Left colon (tissue), 2 donors: ENCODE measurements at regions of chr4 and their contacts with region 1.

Region 1: DNA sequence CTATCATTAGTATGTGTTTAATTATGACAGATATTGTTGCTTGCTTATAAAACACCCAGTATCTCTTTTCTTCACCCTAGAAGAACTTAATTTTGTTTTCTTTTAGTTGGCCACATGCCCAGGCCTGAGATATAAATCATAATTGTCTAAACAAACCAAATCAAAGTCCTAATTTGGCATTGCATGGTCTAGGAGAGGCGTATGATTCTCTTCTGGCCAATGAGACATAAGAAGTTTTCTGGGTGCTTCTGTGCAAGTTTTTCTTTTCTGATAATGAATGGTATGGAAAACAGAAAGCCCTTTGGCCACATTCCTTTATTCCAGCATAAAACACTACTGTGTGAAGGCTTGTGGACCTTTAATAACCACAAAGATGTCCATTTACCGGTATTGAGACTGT is 192.9 kb upstream of the CTSO start:
- DNase-seq: no peak
- ATAC-seq: no peak

Region 2: GRCh38 chr4:156223985-156224384 is 77.4 kb after region 1 on chr4:
- intact Hi-C with region 1: loop called in 1 of 2 experiments (anchors 5 kb)
- DNase-seq: no peak
- ATAC-seq: no peak